ENCODE measurements at regions of chr2 and their contacts with region 1.

Region 1: GRCh38 chr2:8671802-8672201 is 10.1 kb upstream of the ID2 start:
- DNase-seq: no peak
- H3K4me3 ChIP-seq: no peak overlapping the region
- H3K27ac ChIP-seq: no peak overlapping the region
- H3K4me1 ChIP-seq: peaks cover 5% of the 10 kb centered on the region
- H3K27me3 ChIP-seq: no peaks in the 10 kb centered on the region
- CTCF ChIP-seq: no peak

Region 2: DNA sequence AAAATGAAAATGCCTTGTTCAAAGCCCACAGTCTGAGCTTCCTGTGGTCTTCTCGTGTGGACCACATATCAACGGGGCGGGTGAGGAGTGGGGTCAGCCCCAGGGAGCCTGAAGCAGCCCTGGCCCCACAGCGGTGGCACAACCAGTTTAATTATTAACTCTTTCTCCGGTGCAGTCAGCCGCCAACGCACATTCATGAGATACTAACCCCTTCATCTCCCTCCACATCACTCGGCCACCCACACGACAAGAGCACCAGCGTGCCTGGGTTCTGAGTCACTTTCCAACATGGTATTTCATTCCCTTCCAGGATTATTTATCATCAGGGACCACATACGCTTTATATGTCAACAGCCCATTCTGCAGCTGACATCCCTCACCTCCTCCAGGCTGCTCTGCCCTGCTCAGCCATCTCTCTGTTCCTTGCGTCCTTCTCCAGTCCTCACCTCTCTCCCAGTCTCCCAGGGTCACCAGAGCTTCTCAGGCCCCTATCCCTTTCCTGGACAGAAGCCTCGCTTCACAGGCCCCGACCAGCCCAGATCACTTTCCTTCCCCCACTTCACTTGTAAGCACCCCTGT is 38.0 kb before region 1 on chr2:
- intact Hi-C with region 1: loop called (anchors 5 kb)
- DNase-seq: no peak
- H3K4me3 ChIP-seq: no peak overlapping the region
- H3K27ac ChIP-seq: no peak overlapping the region
- H3K4me1 ChIP-seq: no peaks in the 10 kb centered on the region
- H3K27me3 ChIP-seq: no peaks in the 10 kb centered on the region
- CTCF ChIP-seq: no peak

Region 3: DNA sequence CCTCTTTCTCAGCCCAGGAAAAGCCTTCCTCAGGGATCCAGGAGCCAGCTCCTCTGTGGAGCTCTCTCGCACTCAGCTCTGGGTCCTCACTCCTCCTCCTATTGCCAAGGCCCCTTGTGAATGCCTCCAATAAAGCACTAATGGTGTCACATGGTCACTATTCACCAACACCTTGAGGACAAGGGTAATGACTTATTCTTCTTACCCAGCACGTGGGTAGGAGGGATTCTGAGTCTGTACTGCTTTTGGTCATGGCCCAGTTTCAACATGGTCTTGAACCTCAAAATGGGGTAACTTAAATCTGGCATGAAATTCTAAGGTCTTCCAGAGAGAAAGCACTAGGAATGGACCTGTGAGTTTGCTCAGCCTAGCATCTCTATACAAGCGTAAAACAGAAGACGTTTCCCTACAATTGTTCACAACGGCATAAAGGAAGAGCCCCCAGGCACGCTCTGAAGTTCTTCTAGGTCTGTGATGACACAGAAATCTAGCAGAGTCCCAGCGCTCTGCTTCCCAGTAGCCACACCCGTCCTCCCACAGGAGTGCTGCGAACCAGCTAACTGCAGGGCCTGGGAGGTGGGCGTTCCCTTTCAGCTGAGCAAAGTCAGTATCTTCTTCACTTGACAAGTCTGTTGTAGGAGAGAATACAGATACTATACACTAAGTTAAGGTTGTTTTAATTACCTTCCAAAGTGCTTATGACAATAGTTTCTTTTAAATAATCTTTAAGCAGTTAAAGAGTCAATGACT is 180.2 kb after region 1 on chr2:
- intact Hi-C with region 1: no loop called
- DNase-seq: no peak
- H3K4me3 ChIP-seq: no peak overlapping the region
- H3K27ac ChIP-seq: no peak overlapping the region
- H3K4me1 ChIP-seq: no peaks in the 10 kb centered on the region
- H3K27me3 ChIP-seq: no peaks in the 10 kb centered on the region
- CTCF ChIP-seq: no peak